PC-9 (cell line): ENCODE measurements at regions of chr12 and their contacts with region 1.

Region 1: DNA sequence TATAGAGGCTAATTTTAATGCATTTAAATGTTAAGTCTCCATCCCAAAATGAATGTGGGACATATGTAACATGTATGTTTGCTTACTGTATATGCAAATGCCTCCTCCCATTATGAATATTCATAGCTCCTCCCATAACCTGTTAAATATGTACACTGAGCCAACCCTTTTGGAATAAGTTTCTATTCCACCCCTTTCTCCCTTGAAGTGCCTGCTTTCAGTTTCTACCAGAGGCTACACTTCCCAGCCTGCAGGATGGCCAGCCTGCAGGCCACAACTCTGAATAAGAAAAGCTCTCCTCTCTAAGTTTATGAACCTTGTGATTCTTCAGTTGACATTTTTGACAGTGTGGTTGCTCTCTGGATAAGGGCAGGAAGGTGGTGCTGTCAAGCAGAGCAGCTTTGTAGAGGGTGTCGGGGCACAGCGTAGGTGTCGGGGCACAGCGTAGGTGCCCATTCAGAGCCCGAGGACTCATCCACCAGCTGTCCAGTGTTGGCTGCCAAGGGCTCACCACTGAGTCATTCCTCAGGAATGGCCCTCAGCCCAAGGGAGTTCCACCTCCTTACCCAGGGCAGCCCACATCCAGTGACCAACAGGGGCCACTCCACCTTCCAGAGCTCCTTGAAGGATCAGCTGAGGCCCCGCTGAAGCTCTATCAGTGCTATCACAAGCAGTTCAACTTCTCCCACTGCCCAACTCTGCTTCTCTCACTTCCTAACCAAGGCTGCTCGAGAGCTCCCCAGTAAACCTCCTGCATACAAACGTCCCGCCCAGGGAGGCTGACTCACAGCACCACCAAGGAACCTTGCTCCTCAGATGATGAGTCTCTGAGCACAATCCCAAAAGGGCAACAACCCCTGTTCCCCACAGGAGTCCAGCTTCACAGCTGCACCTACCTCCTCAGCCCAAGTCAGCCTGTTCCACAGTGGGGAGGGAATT is 31.4 kb downstream of the VWF start:
- DNase-seq: peak; percentile 97
- H3K4me3 ChIP-seq: peak overlapping the region; percentile 37
- H3K27ac ChIP-seq: peak overlapping the region; percentile 80
- H3K4me1 ChIP-seq: peaks cover 59% of the 10 kb centered on the region
- H3K27me3 ChIP-seq: no peaks in the 10 kb centered on the region
- CTCF ChIP-seq: no peak; the same call in 1 of the 2 replicates

Region 2: GRCh38 chr12:5593086-5593485 is 500.0 kb before region 1 on chr12:
- CTCF ChIA-PET with region 1: no interaction called
- POLR2A ChIA-PET with region 1: no interaction called
- intact Hi-C with region 1: no loop called
- DNase-seq: no peak
- H3K4me3 ChIP-seq: no peak overlapping the region
- H3K27ac ChIP-seq: no peak overlapping the region
- H3K4me1 ChIP-seq: no peaks in the 10 kb centered on the region
- H3K27me3 ChIP-seq: peaks cover 79% of the 10 kb centered on the region
- CTCF ChIP-seq: no peak

Region 3: DNA sequence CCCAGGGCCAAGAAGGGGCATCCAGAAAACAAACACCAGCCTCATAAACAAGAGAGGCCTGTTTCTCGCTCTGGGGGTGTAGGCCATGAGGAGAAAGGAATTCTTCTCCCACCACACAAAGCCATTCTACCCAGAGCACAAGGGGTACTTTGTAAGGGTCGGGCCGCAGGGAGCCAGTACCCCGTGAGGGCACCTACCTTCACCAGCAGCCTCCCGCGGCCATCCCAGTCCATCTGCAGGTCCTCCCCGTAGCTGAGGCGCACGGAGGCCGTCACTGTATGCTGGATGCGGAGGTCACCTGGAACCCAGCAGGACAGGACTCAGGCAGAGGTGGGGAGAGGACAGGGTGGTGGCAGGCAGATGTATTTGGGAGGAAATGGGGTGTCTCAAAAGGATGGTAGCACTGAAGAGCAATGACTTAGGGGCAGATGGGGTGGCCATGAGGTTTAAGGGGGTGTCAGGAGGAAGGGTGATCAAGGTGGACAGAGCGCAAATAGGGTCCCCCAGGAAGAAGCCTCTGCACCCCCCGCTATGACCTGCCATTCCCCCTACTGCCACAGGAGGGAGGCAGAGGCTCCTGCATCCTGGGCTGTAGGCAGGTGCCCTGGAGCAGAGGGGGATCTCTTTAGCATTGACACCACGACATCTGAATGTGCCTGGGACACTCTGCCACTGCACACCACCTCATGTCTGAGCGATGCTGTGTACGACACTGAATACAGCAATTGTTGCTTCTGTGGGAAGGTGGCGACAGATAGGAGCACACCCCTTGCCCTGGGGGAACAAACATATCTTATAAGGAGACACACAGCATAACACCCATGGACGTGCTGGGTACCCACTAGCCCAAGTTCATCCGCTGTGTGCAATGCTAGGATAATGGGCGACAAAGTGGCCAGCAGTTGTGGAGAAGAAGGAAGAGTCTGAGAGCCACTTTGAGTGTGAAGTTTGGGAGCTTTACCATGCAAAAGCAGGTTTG is 30.0 kb before region 1 on chr12:
- CTCF ChIA-PET with region 1: interaction called, 16 read pairs
- POLR2A ChIA-PET with region 1: interaction called, 6 read pairs
- intact Hi-C with region 1: loop called (anchors 1 kb)
- DNase-seq: peak; percentile 48 to 80
- H3K4me3 ChIP-seq: no peak overlapping the region
- H3K27ac ChIP-seq: no peak overlapping the region
- H3K4me1 ChIP-seq: peaks cover 34% of the 10 kb centered on the region
- H3K27me3 ChIP-seq: no peaks in the 10 kb centered on the region
- CTCF ChIP-seq: peak; percentile 98

Region 4: DNA sequence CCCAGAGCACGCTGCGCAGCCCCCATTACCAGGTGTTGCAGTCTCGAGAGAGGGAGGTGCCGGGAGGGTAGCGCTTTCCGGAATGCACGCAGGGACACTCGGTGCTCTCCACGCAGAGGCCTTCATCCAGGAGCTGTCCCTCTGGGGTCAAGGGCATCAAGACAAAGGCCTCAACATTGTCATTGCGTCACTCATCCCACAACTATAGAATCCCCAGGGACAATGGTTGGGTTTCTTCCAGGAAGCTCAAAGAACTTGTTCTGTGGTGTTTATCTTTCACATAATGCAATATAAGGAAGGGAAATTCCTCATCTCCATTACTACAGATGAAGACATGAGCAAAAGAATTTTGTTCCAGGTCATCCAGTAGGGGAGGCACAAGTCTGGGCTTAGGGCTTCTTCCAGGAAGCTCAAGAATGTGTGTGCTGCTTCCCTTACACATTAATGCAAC is 20.7 kb before region 1 on chr12:
- CTCF ChIA-PET with region 1: interaction called, 16 read pairs
- POLR2A ChIA-PET with region 1: interaction called, 11 read pairs
- intact Hi-C with region 1: no loop called
- DNase-seq: peak in 1 of 2 experiments; percentile 89
- H3K4me3 ChIP-seq: no peak overlapping the region
- H3K27ac ChIP-seq: no peak overlapping the region
- H3K4me1 ChIP-seq: peaks cover 10% of the 10 kb centered on the region
- H3K27me3 ChIP-seq: no peaks in the 10 kb centered on the region
- CTCF ChIP-seq: no peak; the same call in 1 of the 2 replicates